ENCODE measurements at regions of chr11 and their contacts with region 1.

Region 1: DNA sequence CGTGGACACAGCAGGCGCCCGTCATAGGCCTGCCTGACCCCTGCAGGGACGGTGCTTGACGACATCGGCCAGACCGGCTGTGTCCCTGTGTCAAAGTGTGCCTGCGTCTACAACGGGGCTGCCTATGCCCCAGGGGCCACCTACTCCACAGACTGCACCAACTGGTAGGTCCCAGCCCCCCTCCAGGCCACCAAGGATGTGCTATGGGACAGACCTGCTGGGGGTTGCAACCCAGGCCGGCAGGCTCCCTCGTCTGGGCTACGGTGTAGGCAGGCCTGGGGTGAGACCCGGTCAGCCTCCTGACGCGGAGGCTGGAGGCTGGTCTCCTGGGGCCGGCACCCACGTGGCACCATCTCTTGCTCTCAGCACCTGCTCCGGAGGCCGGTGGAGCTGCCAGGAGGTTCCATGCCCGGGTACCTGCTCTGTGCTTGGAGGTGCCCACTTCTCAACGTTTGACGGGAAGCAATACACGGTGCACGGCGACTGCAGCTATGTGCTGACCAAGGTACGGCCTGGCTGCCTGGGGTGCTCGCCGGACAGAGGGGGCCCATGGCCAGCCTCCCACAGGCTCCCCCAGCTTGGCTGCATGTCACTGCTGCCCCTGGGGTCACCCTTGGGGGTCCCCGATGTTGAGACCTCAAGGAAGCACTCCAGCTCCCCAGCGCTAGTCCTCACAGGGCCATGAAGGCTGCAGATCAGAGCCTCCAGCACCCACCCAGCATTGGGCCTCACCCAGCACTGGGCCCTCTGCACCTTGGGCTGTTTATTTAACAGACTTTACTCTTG is 7.7 kb downstream of the MUC5AC start:
- DNase-seq: peak in 1 of 2 donors; percentile 56
- H3K4me3 ChIP-seq: no peak overlapping the region
- H3K27ac ChIP-seq: no peak overlapping the region
- H3K4me1 ChIP-seq: no peaks in the 10 kb centered on the region
- H3K27me3 ChIP-seq: peaks cover 0 to 47% of the 10 kb centered on the region in 2 donors
- CTCF ChIP-seq: no peak

Region 2: DNA sequence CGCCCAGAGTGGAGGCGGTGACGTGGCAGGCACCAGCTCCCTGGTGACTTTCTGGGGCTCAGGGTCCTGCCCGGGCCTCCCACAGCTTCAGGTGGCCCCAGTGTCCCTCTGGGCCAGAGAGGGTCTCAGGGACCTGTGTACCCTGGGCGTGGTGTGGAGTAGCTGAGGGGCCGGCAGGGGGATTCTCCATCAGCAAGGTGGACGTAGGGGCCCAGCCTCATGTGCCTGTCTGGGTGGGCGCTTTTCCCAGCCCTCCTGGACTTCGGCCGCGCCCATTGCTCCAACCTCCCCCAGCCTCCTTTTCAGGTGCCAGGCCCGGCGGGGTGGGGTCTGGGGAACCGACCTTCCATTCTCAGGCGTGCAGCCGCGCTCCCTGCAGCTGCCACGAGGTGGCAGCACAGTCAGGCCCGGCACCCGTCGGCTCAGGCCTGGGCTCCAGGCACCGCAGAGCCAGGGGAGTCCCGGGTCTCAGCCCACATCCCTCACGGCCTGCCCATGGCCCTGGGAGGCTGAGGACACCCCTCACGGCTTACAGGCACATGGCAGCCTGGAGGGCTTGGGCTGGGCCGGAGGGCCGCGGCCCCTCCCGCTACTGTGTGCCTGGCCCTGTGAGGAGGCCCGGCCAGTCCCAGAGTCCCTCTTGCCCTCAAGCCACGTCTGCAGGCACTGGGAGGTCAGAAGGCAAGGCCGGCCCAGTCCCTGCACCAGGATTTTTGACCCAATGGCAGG is 37.5 kb after region 1 on chr11:
- intact Hi-C with region 1: no loop called
- DNase-seq: peak; percentile 33 to 73
- H3K4me3 ChIP-seq: no peak overlapping the region
- H3K27ac ChIP-seq: no peak overlapping the region
- H3K4me1 ChIP-seq: peaks cover 0 to 19% (median 3%) of the 10 kb centered on the region in 4 donors
- H3K27me3 ChIP-seq: peaks cover 0 to 70% of the 10 kb centered on the region in 2 donors
- CTCF ChIP-seq: peak; percentile 79 to 93

Region 3: GRCh38 chr11:1326435-1327063 is 161.1 kb after region 1 on chr11:
- intact Hi-C with region 1: no loop called
- DNase-seq: no peak
- H3K4me3 ChIP-seq: no peak overlapping the region
- H3K27ac ChIP-seq: no peak overlapping the region
- H3K4me1 ChIP-seq: no peaks in the 10 kb centered on the region
- H3K27me3 ChIP-seq: peaks cover 0 to 3% of the 10 kb centered on the region in 2 donors
- CTCF ChIP-seq: no peak

Region 4: DNA sequence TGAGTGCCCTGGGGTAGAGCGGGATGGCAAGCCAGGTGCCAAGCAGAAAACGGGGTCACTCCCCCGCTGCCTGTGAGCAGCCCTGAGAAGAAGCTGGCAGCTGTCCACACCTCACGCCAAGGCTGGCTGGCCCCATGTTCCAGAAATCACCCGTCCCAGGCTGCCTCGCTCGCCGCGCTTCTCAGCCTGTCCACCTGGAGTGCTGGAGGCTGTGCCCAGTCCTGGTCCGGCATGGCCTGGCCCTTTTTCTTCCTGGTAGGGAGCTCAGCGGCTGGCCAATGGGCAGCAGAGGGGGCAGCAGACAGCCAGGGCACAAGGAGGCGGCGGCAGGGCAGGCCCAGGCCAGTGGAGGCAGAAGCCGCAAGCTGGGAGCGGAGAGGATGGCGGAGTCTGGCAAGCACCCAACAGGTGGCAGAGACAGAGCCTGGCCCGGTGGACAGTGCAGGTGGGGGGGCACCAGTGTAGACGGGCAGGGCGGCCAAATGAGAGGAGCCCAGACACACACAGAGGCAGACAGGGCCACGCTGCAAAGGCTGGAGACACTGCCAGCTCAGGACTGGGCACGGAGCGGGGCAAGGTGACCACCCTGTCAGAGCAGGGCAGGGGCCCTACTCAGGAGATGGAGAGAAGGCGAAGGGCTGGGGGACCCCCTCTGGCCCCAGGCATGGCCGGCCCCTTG is 1043.4 kb after region 1 on chr11:
- intact Hi-C with region 1: loop called (anchors 5 kb)
- DNase-seq: peak; percentile 9 to 64
- H3K4me3 ChIP-seq: no peak overlapping the region
- H3K27ac ChIP-seq: no peak overlapping the region
- H3K4me1 ChIP-seq: peaks cover 0 to 13% (median 0%) of the 10 kb centered on the region in 4 donors
- H3K27me3 ChIP-seq: peaks cover 0 to 51% of the 10 kb centered on the region in 2 donors
- CTCF ChIP-seq: no peak

Measured in tibial artery (tissue), 4 donors.